Activated CD4-positive, alpha-beta T cell treated with anti-CD3 and anti-CD28 coated beads, Interleukin-2, amount 10 ng/mL, durations not matched to agents 7 days and 5 days (primary cell): ENCODE measurements at regions of chr10 and their contacts with region 1.

Region 1: GRCh38 chr10:11515596-11516430 is 95.6 kb downstream of the USP6NL start:
- DNase-seq: peak; percentile 70
- H3K4me3 Mint-ChIP-seq: no peak overlapping the region
- H3K27ac Mint-ChIP-seq: no peak overlapping the region
- H3K4me1 Mint-ChIP-seq: peaks cover 18% of the 10 kb centered on the region
- H3K27me3 Mint-ChIP-seq: peaks cover 8% of the 10 kb centered on the region

Region 2: GRCh38 chr10:11493646-11494045 is 22.2 kb before region 1 on chr10:
- CTCF ChIA-PET with region 1: no interaction called
- POLR2A ChIA-PET with region 1: no interaction called
- DNase-seq: no peak
- H3K4me3 Mint-ChIP-seq: no peak overlapping the region
- H3K27ac Mint-ChIP-seq: no peak overlapping the region
- H3K4me1 Mint-ChIP-seq: peaks cover 3% of the 10 kb centered on the region
- H3K27me3 Mint-ChIP-seq: no peaks in the 10 kb centered on the region

Region 3: GRCh38 chr10:11757821-11758463 is 242.1 kb after region 1 on chr10:
- CTCF ChIA-PET with region 1: interaction called, 12 read pairs
- POLR2A ChIA-PET with region 1: no interaction called
- DNase-seq: peak; percentile 91
- H3K4me3 Mint-ChIP-seq: no peak overlapping the region
- H3K27ac Mint-ChIP-seq: peak overlapping the region; percentile 83
- H3K4me1 Mint-ChIP-seq: peaks cover 6% of the 10 kb centered on the region
- H3K27me3 Mint-ChIP-seq: no peaks in the 10 kb centered on the region